ENCODE measurements at regions of chr9 and their contacts with region 1.

Region 1: DNA sequence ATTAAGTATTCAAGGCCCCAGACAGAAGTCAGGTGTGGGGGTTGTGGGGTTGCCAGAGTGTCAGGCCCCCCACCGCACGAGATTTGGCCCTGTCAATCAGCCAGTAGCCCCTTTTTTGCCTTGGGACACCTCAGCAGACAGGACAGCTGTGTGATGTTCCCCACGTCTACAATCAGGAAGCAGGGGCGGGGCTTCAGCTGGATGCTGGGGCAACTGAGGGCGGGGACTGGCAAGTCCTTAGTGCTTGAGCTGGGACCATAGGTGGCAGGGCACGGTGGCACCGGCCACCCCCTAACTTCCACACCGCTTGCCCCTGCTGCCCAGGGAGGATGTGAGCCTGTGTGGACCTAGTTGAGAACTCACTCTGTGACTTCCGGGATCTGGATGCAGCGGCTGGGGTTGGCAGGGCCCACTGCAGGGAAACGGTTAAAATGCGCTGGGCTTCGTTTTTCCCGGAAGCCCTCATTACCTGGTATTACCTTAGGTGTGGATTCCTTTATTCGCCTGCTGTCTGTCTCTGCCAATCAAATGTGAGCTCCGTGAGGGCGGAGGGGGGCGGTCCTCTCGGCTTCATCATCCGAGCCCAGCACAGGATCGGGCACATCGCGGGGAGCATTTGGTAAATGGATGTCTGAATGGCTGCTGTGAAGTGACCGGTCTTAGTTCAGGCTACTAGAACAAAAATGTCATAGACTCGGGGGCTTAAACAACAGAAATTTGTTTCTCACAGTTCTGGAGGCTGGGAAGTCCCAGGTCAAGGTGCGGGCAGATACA is 7.5 kb upstream of the GTF3C5 start:
- DNase-seq: peak in 1 of 2 experiments; percentile 57
- H3K4me3 ChIP-seq: no peak overlapping the region
- H3K27ac ChIP-seq: no peak overlapping the region
- H3K4me1 ChIP-seq: peaks cover 0 to 2% (median 0%) of the 10 kb centered on the region in 4 experiments; a peak in 2 of 7 replicates
- H3K27me3 ChIP-seq: peaks cover 0 to 3% (median 0%) of the 10 kb centered on the region in 4 experiments; a peak in 3 of 7 replicates
- CTCF ChIP-seq: no peak
- EP300 ChIP-seq: no peak
- POLR2A ChIP-seq: no peak
- RAD21 ChIP-seq: no peak

Region 2: DNA sequence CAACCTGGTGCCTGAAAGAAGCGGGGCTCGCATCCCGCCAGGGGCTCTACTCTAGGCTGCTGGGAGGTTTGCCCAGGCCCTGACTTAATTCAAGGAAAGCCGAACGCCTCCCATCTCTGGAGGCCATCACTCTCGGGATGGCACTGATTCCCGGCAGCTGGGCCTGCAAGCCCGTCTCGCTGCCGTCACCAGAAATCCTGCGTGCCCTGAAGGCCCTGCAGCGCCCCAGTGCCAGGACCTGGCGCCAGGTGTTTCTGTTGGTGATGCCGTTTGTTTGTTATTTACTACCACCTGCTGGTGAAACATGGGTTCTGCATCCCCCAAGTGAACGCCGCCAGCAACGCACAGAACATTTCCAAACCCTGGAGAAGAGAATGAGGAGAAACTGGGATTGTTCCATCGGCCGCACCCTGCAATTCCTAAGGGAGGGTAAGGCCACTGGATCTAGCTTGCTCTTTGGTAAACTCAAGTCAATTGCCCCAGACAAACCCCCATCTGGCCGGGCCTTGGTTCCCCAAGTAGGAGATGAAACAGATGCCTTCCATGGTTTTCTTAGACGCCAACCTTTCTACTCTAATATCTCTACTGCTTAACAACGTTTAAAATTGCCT is 223.2 kb before region 1 on chr9:
- CTCF ChIA-PET with region 1: no interaction called
- POLR2A ChIA-PET with region 1: no interaction called
- DNase-seq: peak; percentile 80 to 87
- H3K4me3 ChIP-seq: no peak overlapping the region
- H3K27ac ChIP-seq: no peak overlapping the region
- H3K4me1 ChIP-seq: peaks cover 0 to 4% (median 0%) of the 10 kb centered on the region in 4 experiments; a peak in 1 of 7 replicates
- H3K27me3 ChIP-seq: peaks cover 0 to 36% (median 26%) of the 10 kb centered on the region in 4 experiments; a peak in 6 of 7 replicates
- CTCF ChIP-seq: peak; percentile 75 to 98 (median 93)
- EP300 ChIP-seq: 0 out of 3 replicates have a peak, but pooled peaks of 1 of the 2 experiments have one; percentile 42
- POLR2A ChIP-seq: no peak
- RAD21 ChIP-seq: peak; percentile 97 to 98

Region 3: GRCh38 chr9:132840980-132841379 is 182.3 kb before region 1 on chr9:
- CTCF ChIA-PET with region 1: no interaction called
- POLR2A ChIA-PET with region 1: no interaction called
- DNase-seq: no peak
- H3K4me3 ChIP-seq: no peak overlapping the region
- H3K27ac ChIP-seq: no peak overlapping the region
- H3K4me1 ChIP-seq: no peaks in the 10 kb centered on the region
- H3K27me3 ChIP-seq: no peaks in the 10 kb centered on the region
- CTCF ChIP-seq: no peak
- EP300 ChIP-seq: no peak
- POLR2A ChIP-seq: no peak
- RAD21 ChIP-seq: no peak

Region 4: DNA sequence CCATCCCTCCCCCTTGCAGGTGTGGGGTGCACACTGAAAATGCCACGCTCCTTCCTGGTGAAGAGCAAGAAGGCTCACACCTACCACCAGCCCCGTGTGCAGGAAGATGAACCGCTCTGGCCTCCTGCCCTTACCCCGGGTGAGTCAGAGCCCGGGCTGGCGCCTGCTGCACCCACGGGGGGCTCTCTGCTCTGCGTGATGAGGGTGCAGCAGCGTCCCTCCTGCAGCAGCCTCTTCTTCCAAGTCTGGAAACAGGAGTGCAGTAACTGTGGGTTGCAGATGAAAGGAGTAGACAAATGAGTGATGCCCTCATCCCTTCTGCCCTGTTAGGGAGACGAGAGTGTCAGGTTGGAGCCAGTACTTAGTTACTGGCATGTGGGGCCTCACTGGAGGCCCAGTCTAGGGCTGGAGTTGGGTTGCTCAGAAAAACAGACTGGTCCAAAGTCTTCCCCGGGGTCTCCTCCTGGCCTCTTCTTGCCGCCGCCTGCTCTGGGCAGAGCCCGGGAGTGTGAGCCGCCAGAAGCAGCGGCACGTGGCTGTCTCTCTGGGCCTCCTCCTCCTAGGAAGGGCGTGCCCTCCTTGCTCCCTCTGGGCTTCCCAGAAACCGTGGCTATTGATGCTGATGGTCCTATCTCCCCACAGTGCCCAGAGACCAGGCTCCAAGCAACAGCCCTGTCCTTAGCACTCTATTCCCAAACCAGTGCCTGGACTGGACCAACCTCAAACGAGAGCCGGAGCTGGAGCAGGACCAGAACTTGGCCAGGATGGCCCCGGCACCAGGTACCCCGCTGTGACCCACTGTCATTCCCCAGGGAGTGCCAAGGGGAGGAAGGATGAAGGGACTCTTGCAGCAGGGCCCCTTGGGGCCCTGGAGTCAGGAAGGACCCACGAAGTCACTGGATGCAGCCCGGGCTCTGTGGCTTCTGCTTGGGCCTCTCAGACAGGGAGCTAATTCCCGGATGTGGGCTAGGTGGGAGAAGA is 36.4 kb before region 1 on chr9:
- CTCF ChIA-PET with region 1: interaction called, 10 read pairs
- POLR2A ChIA-PET with region 1: no interaction called
- DNase-seq: no peak
- H3K4me3 ChIP-seq: no peak overlapping the region
- H3K27ac ChIP-seq: no peak overlapping the region
- H3K4me1 ChIP-seq: no peaks in the 10 kb centered on the region; a peak in 1 of 7 replicates
- H3K27me3 ChIP-seq: peaks cover 0 to 5% (median 1%) of the 10 kb centered on the region in 4 experiments; a peak in 2 of 7 replicates
- CTCF ChIP-seq: no peak
- EP300 ChIP-seq: no peak
- POLR2A ChIP-seq: no peak
- RAD21 ChIP-seq: no peak

Region 5: DNA sequence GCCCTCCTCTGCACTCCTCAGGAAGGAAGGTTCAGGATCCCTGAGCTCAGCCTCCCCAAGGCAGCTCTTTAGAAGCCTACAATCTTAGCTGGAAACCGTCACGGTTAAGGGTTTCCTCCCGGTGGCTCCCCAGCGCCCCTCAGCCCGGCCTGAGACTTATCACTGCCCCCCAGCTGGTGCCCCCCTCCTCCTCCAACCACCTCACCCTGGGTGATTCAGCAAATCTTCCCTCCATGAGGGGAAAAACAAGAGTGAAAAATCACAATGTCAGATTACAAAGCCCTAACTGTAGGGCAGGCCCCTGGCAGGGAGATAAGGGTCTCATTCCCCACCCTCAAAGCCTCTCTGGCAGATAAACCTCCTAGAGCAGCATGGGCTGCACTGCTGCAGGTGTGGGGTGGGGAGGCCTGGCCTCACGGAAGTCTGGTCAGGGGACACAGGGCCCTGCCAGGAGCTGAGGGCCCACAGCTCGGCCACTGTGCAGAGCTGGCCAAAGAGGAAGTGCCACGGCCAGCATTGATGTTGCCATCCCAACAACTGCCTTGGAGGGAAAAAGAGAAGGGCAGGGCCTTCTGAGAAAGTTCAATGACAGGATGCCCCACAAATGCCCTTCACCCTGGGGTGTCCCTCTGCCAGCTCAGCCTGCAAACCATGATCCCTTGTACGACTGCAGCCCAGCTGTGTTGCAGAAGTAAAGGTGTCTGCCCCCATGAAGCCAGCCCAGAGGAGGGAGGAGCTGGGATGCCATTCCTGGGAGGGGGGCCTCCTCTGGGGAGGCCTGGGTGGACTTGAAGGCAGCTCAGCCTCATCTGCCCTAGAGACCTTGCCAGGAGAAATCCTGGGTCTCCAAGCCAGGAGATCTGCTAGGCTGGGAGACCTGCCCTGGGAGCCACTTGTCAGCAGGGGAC is 19.0 kb before region 1 on chr9:
- CTCF ChIA-PET with region 1: interaction called, 57 read pairs
- POLR2A ChIA-PET with region 1: interaction called, 3 read pairs
- DNase-seq: no peak
- H3K4me3 ChIP-seq: peak overlapping the region in 1 of 4 experiments; percentile 28; a peak in 4 of 8 replicates
- H3K27ac ChIP-seq: no peak overlapping the region
- H3K4me1 ChIP-seq: peaks cover 3 to 25% (median 18%) of the 10 kb centered on the region in 4 experiments
- H3K27me3 ChIP-seq: peaks cover 0 to 40% (median 23%) of the 10 kb centered on the region in 4 experiments; a peak in 6 of 7 replicates
- CTCF ChIP-seq: no peak
- EP300 ChIP-seq: no peak
- POLR2A ChIP-seq: no peak
- RAD21 ChIP-seq: no peak

Region 6: GRCh38 chr9:133048569-133048968 is 25.3 kb after region 1 on chr9:
- CTCF ChIA-PET with region 1: interaction called, 11 read pairs
- POLR2A ChIA-PET with region 1: no interaction called
- DNase-seq: no peak
- H3K4me3 ChIP-seq: no peak overlapping the region
- H3K27ac ChIP-seq: no peak overlapping the region
- H3K4me1 ChIP-seq: no peaks in the 10 kb centered on the region
- H3K27me3 ChIP-seq: no peaks in the 10 kb centered on the region
- CTCF ChIP-seq: peak; percentile 38 to 59 (median 55)
- EP300 ChIP-seq: no peak
- POLR2A ChIP-seq: no peak
- RAD21 ChIP-seq: peak; percentile 44 to 65

Region 7: GRCh38 chr9:133282464-133283238 is 259.3 kb after region 1 on chr9:
- CTCF ChIA-PET with region 1: no interaction called
- POLR2A ChIA-PET with region 1: no interaction called
- DNase-seq: no peak
- H3K4me3 ChIP-seq: no peak overlapping the region
- H3K27ac ChIP-seq: no peak overlapping the region
- H3K4me1 ChIP-seq: no peaks in the 10 kb centered on the region
- H3K27me3 ChIP-seq: peaks cover under 1 to 6% (median 4%) of the 10 kb centered on the region in 4 experiments; a peak in 3 of 7 replicates
- CTCF ChIP-seq: no peak
- EP300 ChIP-seq: no peak
- POLR2A ChIP-seq: no peak
- RAD21 ChIP-seq: no peak

Region 8: DNA sequence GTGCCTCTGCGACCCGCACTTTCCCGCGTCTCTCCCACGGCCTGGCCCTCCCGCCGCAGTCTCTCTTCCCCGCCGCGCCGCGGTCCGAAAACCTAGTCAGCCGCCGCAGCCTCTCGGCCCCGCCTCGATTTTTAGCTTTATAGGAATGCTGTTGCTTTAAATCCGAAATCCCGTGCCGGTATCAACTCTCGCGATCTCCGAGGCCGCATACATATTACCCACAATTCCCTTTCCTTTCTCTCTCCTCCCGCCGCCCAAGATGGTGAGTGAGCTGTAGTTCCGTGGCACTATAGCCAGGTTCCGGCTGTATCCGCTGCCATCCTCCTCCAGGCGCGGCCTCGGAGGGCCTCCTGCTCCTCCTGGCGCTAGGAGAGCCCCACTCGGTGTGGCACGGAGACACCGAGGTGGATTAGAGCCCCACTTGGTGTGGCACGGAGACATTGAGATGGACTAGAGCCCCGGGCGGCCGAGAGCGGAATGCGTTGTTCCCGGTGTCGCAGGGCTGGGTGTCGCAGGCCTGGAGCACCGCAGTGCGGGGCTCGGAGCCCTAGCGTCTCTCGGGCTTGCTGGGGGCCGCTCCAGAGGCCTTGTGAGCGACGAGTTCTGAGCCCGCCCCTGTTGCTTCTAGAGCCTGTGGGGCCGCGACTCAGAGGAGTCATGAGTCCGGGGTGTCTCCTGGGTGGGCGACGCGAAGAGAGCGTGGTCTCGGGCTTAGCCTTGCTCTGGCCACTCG is 324.8 kb after region 1 on chr9 and contains the starts of genes MED22 and RPL7A:
- CTCF ChIA-PET with region 1: no interaction called
- POLR2A ChIA-PET with region 1: no interaction called
- DNase-seq: peak; percentile 77 to 93
- H3K4me3 ChIP-seq: peak within 1 kb of the TSS; percentile 93 to 100 (median 96)
- H3K27ac ChIP-seq: peak within 1 kb of the TSS; percentile 99
- H3K4me1 ChIP-seq: peaks cover 0 to 10% (median 7%) of the 10 kb centered on the region in 4 experiments; a peak in 6 of 7 replicates
- H3K27me3 ChIP-seq: no peaks in the 10 kb centered on the region
- CTCF ChIP-seq: no peak
- EP300 ChIP-seq: no peak
- POLR2A ChIP-seq: peak in 1 of 2 experiments; percentile 97; a peak in 1 of 3 replicates
- RAD21 ChIP-seq: no peak
- total RNA-seq, gene MED22: 56.4 and 61.8 TPM in 2 replicates
- total RNA-seq, gene RPL7A: 2,578 and 2,633 TPM in 2 replicates